ENCODE measurements at regions of chr17 and their contacts with region 1.

Region 1: GRCh38 chr17:21275579-21276263 is 8.8 kb upstream of the MAP2K3 start:
- DNase-seq: peak; percentile 99
- ATAC-seq: peak; percentile 92
- H3K4me3 Mint-ChIP-seq: peak overlapping the region; percentile 88
- H3K27ac Mint-ChIP-seq: peak overlapping the region; percentile 88
- H3K4me1 Mint-ChIP-seq: peaks cover 34% of the 10 kb centered on the region
- H3K27me3 Mint-ChIP-seq: no peaks in the 10 kb centered on the region
- CTCF ChIP-seq: no peak

Region 2: DNA sequence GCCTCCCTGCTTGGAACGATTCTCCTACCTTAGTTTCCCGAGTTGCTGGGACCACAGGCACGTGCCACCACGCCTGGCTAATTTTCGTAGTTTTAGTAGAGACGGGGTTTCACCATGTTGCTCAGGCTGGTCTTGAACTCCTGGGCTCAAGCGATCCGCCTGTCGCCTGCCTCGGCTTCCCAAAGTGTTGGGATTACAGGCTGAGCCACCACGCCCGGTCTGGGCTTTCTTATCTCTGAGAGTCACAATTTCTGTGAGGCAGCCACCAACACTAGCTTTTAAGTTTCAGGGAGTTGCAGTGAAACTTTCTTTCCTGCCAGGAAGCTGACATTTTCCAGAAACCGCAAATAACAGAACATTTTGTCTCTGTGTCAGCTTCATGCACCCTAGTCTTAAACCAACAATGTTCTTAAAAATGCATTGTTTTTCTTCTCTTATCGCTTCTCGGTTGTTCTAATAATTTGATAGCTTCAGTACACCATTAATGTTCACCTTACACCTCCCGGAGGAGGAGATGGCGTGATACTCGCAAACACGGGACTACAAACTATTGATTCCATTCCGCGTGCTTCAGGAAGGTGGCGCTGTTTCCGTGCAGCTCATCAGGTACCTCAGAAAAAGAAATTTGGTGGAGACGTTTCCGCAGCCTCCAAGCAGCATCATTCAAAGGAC is 156.3 kb before region 1 on chr17:
- CTCF ChIA-PET with region 1: interaction called, 8 read pairs
- POLR2A ChIA-PET with region 1: no interaction called
- intact Hi-C with region 1: loop called (anchors 2 kb)
- DNase-seq: peak; percentile 41
- ATAC-seq: peak; percentile 93
- H3K4me3 Mint-ChIP-seq: no peak overlapping the region
- H3K27ac Mint-ChIP-seq: no peak overlapping the region
- H3K4me1 Mint-ChIP-seq: peaks cover 6% of the 10 kb centered on the region
- H3K27me3 Mint-ChIP-seq: peaks cover 9% of the 10 kb centered on the region
- CTCF ChIP-seq: no peak

Region 3: DNA sequence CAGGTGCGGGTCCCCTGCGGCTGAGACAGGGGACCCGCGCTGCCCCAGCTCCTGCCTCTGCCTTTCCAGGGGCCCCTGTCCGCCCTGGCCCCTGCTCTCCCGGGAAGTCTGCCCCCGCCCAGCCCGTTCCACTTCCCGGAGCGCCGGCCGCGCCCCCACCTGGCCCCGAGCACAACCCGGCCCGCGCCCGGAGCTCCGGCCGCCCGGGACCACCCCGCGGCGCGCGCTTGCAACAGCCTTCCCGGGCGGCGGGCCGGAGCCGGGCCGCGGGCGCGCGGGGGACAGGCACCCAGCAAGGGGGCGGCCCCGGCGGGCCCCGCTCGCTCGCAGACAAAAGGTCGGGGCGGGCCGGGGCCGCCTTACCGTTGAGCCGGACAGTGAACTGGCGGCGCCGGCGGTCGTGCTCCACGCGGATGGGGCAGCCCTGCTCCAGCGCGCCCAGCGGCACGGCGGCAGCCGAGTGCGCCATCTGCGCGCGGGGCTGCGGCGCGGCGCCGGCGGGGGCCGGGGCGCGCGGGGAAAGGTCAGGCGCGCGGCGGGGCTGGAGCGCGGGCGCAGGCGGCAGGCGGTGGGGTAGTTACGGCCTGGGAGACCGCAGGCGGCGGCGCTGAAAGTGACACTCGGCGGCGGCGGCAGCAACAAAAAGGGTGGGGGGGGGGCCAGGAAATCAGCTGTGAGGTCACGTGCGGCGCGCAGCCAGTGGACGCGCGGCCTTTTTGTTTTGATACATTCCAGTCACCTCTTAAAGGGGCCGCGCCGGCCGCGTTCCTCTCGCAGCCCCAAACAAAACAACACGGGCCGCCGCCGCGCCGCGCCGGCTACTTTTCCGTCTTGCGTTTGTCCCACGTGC is 22.7 kb before region 1 on chr17 and contains the start of gene NATD1:
- CTCF ChIA-PET with region 1: interaction called, 3 read pairs
- POLR2A ChIA-PET with region 1: interaction called, 3 read pairs
- intact Hi-C with region 1: loop called (anchors 1 kb)
- DNase-seq: peak; percentile 65
- ATAC-seq: peak; percentile 78
- H3K4me3 Mint-ChIP-seq: peak within 1 kb of the TSS; percentile 82
- H3K27ac Mint-ChIP-seq: peak within 1 kb of the TSS; percentile 76
- H3K4me1 Mint-ChIP-seq: peaks cover 21% of the 10 kb centered on the region
- H3K27me3 Mint-ChIP-seq: no peaks in the 10 kb centered on the region
- CTCF ChIP-seq: no peak
- total RNA-seq, gene NATD1: 1.5 and 1.7 TPM in 2 replicates

Region 4: DNA sequence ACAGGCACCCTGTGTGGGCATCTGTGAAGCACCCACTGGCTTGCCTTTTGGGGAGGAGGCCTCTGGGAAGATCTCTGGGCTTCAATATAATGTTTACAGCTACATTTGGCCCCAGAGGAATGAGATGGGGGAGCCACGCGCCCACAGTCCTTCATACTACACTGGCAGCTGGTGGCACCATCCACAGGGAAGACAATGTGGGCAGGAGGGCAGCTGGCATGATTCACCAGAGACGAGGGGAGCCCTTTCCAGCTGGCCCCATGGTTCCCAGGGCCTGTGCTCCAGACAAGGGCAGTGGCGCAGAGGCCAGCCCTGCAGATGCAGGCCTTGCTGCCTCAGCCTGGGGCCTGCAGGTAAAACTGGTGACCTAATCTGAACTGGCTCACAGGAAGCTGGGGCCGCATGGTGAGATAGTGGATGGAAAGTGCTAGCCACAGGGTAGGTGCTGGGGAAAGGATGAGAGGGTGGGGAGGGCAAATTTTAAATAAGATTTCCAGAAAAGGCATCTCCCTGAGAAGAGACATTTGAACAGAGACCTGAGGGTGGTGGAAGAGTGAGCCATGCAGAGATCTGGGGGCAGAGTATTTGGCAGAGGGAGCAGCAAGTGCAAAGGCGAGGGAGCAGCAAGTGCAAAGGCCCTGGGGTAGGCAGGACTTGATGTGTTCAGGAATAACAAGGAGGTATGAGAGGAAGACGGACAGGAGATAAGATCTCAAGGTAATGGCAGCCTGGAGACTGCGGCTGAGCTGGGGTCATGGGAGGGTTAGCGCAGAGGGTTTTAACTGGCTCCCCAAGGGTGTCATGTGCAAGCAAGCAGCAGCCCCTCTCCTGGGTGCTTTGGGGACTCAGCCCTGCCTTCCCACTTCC is 88.3 kb after region 1 on chr17:
- CTCF ChIA-PET with region 1: no interaction called
- POLR2A ChIA-PET with region 1: no interaction called
- intact Hi-C with region 1: no loop called
- DNase-seq: no peak
- ATAC-seq: no peak
- H3K4me3 Mint-ChIP-seq: no peak overlapping the region
- H3K27ac Mint-ChIP-seq: no peak overlapping the region
- H3K4me1 Mint-ChIP-seq: peaks cover 6% of the 10 kb centered on the region
- H3K27me3 Mint-ChIP-seq: peaks cover 1% of the 10 kb centered on the region
- CTCF ChIP-seq: no peak

Region 5: DNA sequence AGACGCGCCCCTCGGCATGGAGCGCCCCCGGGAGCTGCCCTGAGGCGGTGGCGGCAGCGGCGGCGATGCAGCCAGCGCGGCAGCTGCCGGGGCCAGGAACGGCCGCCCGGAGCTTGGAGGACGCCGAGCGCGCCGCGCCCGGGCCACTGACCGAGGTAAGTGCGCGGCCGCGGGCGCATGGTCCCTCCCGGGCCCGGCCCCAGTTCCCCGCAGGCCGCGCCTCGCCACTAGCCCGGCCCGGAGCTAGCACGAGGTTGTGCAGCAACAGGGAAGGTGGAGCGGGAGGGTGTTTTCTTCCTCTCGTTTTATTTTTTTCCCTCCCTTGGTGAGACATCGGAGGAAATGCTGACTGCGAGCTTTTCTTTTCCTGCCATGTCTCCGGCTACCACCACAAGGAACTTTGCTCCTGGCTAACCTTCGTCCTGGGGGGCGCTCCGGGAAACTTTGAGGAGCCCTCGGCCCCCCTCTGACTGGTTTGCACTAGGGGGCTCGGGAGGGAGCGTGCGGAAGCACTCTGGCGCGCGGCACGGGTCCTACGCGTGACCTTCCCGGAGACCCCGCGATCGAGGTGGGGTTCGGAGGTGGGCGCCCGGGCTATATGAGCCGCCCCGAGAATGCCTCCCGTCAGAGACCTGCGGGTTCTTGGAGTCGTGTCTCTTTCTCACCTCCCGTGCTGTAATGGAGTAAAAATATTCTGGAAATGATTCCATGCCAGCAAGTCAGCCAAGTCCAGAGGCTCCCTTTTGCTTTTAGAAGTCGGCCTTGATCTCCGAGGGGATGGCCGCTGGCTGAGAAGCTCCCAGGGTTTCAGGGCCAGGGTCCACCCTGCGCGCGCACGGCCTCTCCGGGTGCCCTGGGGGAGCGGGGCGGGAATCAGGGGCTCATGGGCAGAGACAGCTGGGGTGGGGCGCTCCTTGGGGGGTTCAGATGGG is 101.3 kb after region 1 on chr17:
- CTCF ChIA-PET with region 1: interaction called, 3 read pairs
- POLR2A ChIA-PET with region 1: no interaction called
- intact Hi-C with region 1: loop called (anchors 2 kb)
- DNase-seq: no peak
- ATAC-seq: no peak
- H3K4me3 Mint-ChIP-seq: peak overlapping the region; percentile 35
- H3K27ac Mint-ChIP-seq: no peak overlapping the region
- H3K4me1 Mint-ChIP-seq: peaks cover 28% of the 10 kb centered on the region
- H3K27me3 Mint-ChIP-seq: peaks cover 46% of the 10 kb centered on the region
- CTCF ChIP-seq: no peak

Measured in activated B cell treated with CpG ODN at 0.5 μM for 24 hours (primary cell).